Posterior vena cava (tissue), 2 donors: ENCODE measurements at regions of chr1 and their contacts with region 1.

Region 1: DNA sequence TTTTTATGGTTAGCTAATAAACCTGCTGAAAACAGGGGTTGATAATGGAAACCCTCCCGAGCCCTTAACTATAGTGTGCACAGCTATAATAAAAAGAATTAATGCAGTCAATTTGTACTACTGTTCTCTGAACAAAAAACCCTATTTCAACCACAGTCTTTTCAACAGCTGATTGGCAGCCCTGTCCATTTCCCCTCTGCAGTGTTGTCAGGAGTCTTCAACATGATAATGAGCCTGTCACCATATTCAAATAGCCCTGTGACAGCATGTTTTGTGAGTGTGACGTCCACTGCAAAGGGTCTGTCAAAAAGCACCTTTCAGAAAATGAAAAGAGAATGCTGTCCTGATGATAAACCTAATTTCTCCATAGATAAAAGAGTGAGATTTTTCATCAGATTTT is 92.7 kb downstream of the ESRRG start:
- DNase-seq: no peak

Region 2: GRCh38 chr1:216410026-216410425 is 220.5 kb before region 1 on chr1:
- intact Hi-C with region 1: no loop called
- DNase-seq: no peak

Region 3: GRCh38 chr1:216670118-216670900 is 39.8 kb after region 1 on chr1:
- intact Hi-C with region 1: loop called in 1 of 2 experiments (anchors 1 kb)
- DNase-seq: no peak